CD4-positive, alpha-beta memory T cell (primary cell): ENCODE measurements at regions of chr13 and their contacts with region 1.

Region 1: GRCh38 chr13:95191821-95192563 is 109.3 kb downstream of the ABCC4 start:
- DNase-seq: peak in 4 of 5 donors; percentile 22 to 38 (median 35)
- H3K4me3 ChIP-seq: no peak overlapping the region
- H3K4me3 Mint-ChIP-seq: no peak overlapping the region
- H3K27ac ChIP-seq: no peak overlapping the region
- H3K27ac Mint-ChIP-seq: peak overlapping the region in 1 of 7 donors; percentile 55
- H3K4me1 ChIP-seq: peaks cover under 1% of the 10 kb centered on the region
- H3K4me1 Mint-ChIP-seq: peaks cover 7 to 19% (median 16%) of the 10 kb centered on the region in 4 donors
- H3K27me3 ChIP-seq: no peaks in the 10 kb centered on the region
- H3K27me3 Mint-ChIP-seq: no peaks in the 10 kb centered on the region

Region 2: DNA sequence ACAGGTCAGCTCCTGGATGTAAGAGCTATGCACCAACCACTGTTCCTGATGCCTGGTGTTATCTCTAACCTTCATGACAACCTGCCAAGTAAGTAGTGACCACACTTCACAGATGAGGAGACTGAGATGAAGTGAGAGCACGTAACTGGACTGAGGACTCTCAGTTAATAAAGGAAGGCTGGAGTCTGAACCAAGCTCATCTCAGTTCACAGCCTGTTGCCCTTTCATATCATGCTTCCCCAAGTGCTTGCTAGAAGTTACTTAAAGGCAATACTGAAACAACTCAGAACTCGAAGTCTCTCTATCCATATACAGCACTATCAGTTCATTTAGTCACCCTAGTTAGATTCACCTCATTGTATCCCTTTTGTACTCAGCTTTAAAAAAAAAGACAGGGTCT is 10.4 kb before region 1 on chr13:
- CTCF ChIA-PET with region 1: interaction called, 74 read pairs
- POLR2A ChIA-PET with region 1: no interaction called
- intact Hi-C with region 1: no loop called
- DNase-seq: no peak
- H3K4me3 ChIP-seq: no peak overlapping the region
- H3K4me3 Mint-ChIP-seq: peak overlapping the region in 3 of 8 donors; percentile 17 to 69 (median 42)
- H3K27ac ChIP-seq: no peak overlapping the region
- H3K27ac Mint-ChIP-seq: peak overlapping the region in 4 of 7 donors; percentile 19 to 89 (median 74)
- H3K4me1 ChIP-seq: peaks cover 63% of the 10 kb centered on the region
- H3K4me1 Mint-ChIP-seq: peaks cover 43 to 72% (median 61%) of the 10 kb centered on the region in 4 donors
- H3K27me3 ChIP-seq: no peaks in the 10 kb centered on the region
- H3K27me3 Mint-ChIP-seq: no peaks in the 10 kb centered on the region

Region 3: DNA sequence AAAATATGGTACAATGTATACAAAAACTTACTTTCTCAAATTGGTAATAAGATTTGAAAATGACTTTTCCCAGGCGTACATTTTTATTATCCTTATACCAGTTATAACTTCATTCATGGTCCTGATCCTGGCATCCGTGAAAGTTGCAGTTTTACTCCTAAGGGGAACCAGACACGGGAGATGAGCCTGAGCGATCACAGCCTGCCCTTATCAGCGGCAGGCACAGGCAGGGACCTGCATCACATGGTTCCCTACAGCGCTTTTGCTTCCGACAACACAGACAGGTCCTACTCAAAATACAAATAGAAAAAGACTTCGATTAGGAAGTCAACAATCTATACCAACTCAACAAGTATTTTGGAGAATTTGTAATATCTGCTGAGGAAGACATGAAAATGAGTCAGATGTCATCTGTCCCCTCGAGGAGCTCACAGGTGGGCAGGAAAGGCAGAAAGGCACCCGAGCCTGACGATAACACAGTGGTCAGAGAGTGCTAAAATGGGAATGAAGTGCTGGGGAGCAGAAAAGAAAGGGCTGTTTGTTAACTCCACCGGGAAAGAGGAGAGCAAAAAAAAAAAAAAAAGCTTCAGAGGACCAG is 15.9 kb after region 1 on chr13:
- CTCF ChIA-PET with region 1: interaction called, 18 read pairs
- POLR2A ChIA-PET with region 1: no interaction called
- intact Hi-C with region 1: no loop called
- DNase-seq: no peak
- H3K4me3 ChIP-seq: no peak overlapping the region
- H3K4me3 Mint-ChIP-seq: no peak overlapping the region
- H3K27ac ChIP-seq: no peak overlapping the region
- H3K27ac Mint-ChIP-seq: peak overlapping the region in 1 of 7 donors; percentile 12
- H3K4me1 ChIP-seq: no peaks in the 10 kb centered on the region
- H3K4me1 Mint-ChIP-seq: no peaks in the 10 kb centered on the region
- H3K27me3 ChIP-seq: no peaks in the 10 kb centered on the region
- H3K27me3 Mint-ChIP-seq: no peaks in the 10 kb centered on the region

Region 4: GRCh38 chr13:95378603-95379002 is 186.6 kb after region 1 on chr13:
- CTCF ChIA-PET with region 1: interaction called, 256 read pairs
- POLR2A ChIA-PET with region 1: interaction called, 17 read pairs
- intact Hi-C with region 1: loop called (anchors 1 kb)
- DNase-seq: no peak
- H3K4me3 ChIP-seq: no peak overlapping the region
- H3K4me3 Mint-ChIP-seq: no peak overlapping the region
- H3K27ac ChIP-seq: no peak overlapping the region
- H3K27ac Mint-ChIP-seq: no peak overlapping the region
- H3K4me1 ChIP-seq: no peaks in the 10 kb centered on the region
- H3K4me1 Mint-ChIP-seq: peaks cover 3 to 6% (median 4%) of the 10 kb centered on the region in 4 donors
- H3K27me3 ChIP-seq: no peaks in the 10 kb centered on the region
- H3K27me3 Mint-ChIP-seq: peaks cover 2 to 7% of the 10 kb centered on the region in 2 donors

Region 5: DNA sequence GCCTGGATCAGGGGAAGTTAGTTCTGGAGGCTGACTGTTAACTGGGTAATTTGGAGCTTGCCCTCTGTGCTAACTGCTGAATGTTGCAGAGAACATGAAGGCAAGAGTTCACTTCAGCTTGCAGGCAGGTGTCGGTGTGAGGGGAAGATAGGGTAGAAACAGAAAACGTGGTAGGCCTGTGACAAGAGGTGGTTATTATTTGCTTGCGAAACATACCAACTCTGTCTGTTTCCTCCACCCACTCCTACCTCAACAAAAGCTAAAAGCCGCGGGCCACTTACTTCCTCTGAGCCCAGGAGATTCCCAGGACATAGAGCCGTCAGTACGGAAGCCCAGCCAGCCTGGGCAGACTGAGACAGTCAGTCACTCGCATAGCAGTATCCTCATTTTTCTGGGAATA is 228.5 kb after region 1 on chr13:
- CTCF ChIA-PET with region 1: interaction called, 17 read pairs
- POLR2A ChIA-PET with region 1: no interaction called
- intact Hi-C with region 1: no loop called
- DNase-seq: no peak
- H3K4me3 ChIP-seq: no peak overlapping the region
- H3K4me3 Mint-ChIP-seq: no peak overlapping the region
- H3K27ac ChIP-seq: no peak overlapping the region
- H3K27ac Mint-ChIP-seq: no peak overlapping the region
- H3K4me1 ChIP-seq: no peaks in the 10 kb centered on the region
- H3K4me1 Mint-ChIP-seq: no peaks in the 10 kb centered on the region
- H3K27me3 ChIP-seq: no peaks in the 10 kb centered on the region
- H3K27me3 Mint-ChIP-seq: peaks cover 5 to 11% of the 10 kb centered on the region in 2 donors

Region 6: DNA sequence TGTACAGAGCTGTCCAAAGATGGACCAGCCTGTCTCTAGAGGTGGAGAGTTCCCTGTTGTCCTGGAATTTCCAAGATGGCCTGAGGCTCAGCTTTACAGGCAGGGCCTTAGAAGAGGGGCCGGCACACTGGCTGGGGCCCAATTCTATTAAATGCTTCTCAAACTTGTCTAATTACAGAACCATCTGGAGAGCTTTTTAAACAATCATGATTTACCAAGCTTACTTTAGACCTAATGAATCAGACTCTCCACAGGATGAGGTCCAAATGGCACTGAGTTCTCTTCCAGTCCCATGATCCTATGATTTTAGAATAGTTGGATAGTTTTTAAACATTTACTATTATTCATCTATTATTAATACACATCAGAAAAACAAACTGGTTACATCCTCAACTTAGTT is 608.4 kb after region 1 on chr13:
- CTCF ChIA-PET with region 1: no interaction called
- POLR2A ChIA-PET with region 1: no interaction called
- intact Hi-C with region 1: no loop called
- DNase-seq: no peak
- H3K4me3 ChIP-seq: no peak overlapping the region
- H3K4me3 Mint-ChIP-seq: no peak overlapping the region
- H3K27ac ChIP-seq: no peak overlapping the region
- H3K27ac Mint-ChIP-seq: no peak overlapping the region
- H3K4me1 ChIP-seq: no peaks in the 10 kb centered on the region
- H3K4me1 Mint-ChIP-seq: peaks cover 0 to 1% (median 0%) of the 10 kb centered on the region in 4 donors
- H3K27me3 ChIP-seq: no peaks in the 10 kb centered on the region
- H3K27me3 Mint-ChIP-seq: peaks cover 1 to 8% of the 10 kb centered on the region in 2 donors

Region 7: GRCh38 chr13:95834134-95834765 is 642.3 kb after region 1 on chr13:
- CTCF ChIA-PET with region 1: interaction called, 6 read pairs
- POLR2A ChIA-PET with region 1: no interaction called
- intact Hi-C with region 1: loop called (anchors 1 kb)
- DNase-seq: peak; percentile 52 to 63 (median 59)
- H3K4me3 ChIP-seq: no peak overlapping the region
- H3K4me3 Mint-ChIP-seq: no peak overlapping the region
- H3K27ac ChIP-seq: no peak overlapping the region
- H3K27ac Mint-ChIP-seq: no peak overlapping the region
- H3K4me1 ChIP-seq: no peaks in the 10 kb centered on the region
- H3K4me1 Mint-ChIP-seq: peaks cover 0 to 2% (median 0%) of the 10 kb centered on the region in 4 donors
- H3K27me3 ChIP-seq: no peaks in the 10 kb centered on the region
- H3K27me3 Mint-ChIP-seq: peaks cover 14 to 18% of the 10 kb centered on the region in 2 donors